Activated CD4-positive, alpha-beta T cell treated with anti-CD3 and anti-CD28 coated beads, Interleukin-2, amount 10 ng/mL, durations not matched to agents 7 days and 5 days (primary cell): ENCODE measurements at regions of chr12 and their contacts with region 1.

Region 1: GRCh38 chr12:45728630-45729232 is 775 bp upstream of the ARID2 start:
- DNase-seq: peak; percentile 97
- H3K4me3 Mint-ChIP-seq: peak overlapping the region; percentile 100
- H3K27ac Mint-ChIP-seq: peak overlapping the region; percentile 99
- H3K4me1 Mint-ChIP-seq: peaks cover 20% of the 10 kb centered on the region
- H3K27me3 Mint-ChIP-seq: no peaks in the 10 kb centered on the region

Region 2: GRCh38 chr12:45543906-45544315 is 184.8 kb before region 1 on chr12:
- CTCF ChIA-PET with region 1: interaction called, 25 read pairs
- POLR2A ChIA-PET with region 1: interaction called, 3 read pairs
- DNase-seq: peak; percentile 71
- H3K4me3 Mint-ChIP-seq: no peak overlapping the region
- H3K27ac Mint-ChIP-seq: no peak overlapping the region
- H3K4me1 Mint-ChIP-seq: peaks cover 4% of the 10 kb centered on the region
- H3K27me3 Mint-ChIP-seq: peaks cover 11% of the 10 kb centered on the region

Region 3: GRCh38 chr12:45670346-45671065 is 58.2 kb before region 1 on chr12:
- CTCF ChIA-PET with region 1: interaction called, 20 read pairs
- POLR2A ChIA-PET with region 1: no interaction called
- DNase-seq: peak; percentile 48
- H3K4me3 Mint-ChIP-seq: peak overlapping the region; percentile 9
- H3K27ac Mint-ChIP-seq: peak overlapping the region; percentile 62
- H3K4me1 Mint-ChIP-seq: peaks cover 45% of the 10 kb centered on the region
- H3K27me3 Mint-ChIP-seq: peaks cover 4% of the 10 kb centered on the region

Region 4: GRCh38 chr12:45743247-45743646 is 14.5 kb after region 1 on chr12:
- CTCF ChIA-PET with region 1: interaction called, 12 read pairs
- POLR2A ChIA-PET with region 1: no interaction called
- DNase-seq: no peak
- H3K4me3 Mint-ChIP-seq: no peak overlapping the region
- H3K27ac Mint-ChIP-seq: no peak overlapping the region
- H3K4me1 Mint-ChIP-seq: peaks cover 26% of the 10 kb centered on the region
- H3K27me3 Mint-ChIP-seq: no peaks in the 10 kb centered on the region

Region 5: DNA sequence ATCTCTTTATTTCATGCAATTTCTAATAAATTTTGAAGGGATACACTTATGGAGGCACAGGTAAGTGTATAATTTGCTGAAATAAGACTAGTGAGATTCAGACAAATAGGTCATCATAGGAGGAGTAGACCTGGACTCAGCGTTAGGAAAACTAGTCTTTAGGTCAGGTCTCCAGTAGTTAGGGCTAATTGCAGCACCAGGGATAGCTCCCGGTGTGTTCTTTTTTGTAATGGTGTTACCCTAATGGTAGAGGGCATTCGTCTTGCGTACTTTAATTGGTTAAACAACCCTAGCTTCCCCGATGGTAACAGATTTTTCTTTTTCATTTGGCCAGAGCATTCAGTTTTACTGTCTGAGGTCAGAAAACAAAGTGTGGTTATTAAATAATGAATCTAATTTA is 65.7 kb after region 1 on chr12:
- CTCF ChIA-PET with region 1: no interaction called
- POLR2A ChIA-PET with region 1: no interaction called
- DNase-seq: no peak
- H3K4me3 Mint-ChIP-seq: no peak overlapping the region
- H3K27ac Mint-ChIP-seq: no peak overlapping the region
- H3K4me1 Mint-ChIP-seq: no peaks in the 10 kb centered on the region
- H3K27me3 Mint-ChIP-seq: no peaks in the 10 kb centered on the region

Region 6: DNA sequence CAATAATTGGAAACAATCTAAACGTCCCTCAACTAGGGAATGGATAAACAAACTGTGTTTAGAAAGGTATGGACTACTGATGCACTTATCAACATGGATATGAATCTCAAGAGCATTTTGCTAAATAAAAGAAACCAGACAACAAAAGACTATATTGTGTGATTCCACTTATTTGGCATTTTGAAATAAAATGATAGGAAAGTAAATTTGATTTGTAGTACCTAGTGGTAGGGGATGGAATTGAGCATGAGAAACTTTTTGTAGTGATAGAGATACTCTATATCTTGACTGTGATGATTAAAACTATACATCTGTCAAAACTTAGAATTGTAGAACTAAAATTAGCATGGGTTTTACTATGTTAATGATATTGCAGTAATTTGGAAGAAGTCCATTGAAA is 87.9 kb after region 1 on chr12:
- CTCF ChIA-PET with region 1: no interaction called
- POLR2A ChIA-PET with region 1: no interaction called
- DNase-seq: no peak
- H3K4me3 Mint-ChIP-seq: no peak overlapping the region
- H3K27ac Mint-ChIP-seq: no peak overlapping the region
- H3K4me1 Mint-ChIP-seq: no peaks in the 10 kb centered on the region
- H3K27me3 Mint-ChIP-seq: no peaks in the 10 kb centered on the region